Activated CD8-positive, alpha-beta T cell treated with anti-CD3 and anti-CD28 coated beads for 36 hours (primary cell): ENCODE measurements at regions of chr1 and their contacts with region 1.

Region 1: DNA sequence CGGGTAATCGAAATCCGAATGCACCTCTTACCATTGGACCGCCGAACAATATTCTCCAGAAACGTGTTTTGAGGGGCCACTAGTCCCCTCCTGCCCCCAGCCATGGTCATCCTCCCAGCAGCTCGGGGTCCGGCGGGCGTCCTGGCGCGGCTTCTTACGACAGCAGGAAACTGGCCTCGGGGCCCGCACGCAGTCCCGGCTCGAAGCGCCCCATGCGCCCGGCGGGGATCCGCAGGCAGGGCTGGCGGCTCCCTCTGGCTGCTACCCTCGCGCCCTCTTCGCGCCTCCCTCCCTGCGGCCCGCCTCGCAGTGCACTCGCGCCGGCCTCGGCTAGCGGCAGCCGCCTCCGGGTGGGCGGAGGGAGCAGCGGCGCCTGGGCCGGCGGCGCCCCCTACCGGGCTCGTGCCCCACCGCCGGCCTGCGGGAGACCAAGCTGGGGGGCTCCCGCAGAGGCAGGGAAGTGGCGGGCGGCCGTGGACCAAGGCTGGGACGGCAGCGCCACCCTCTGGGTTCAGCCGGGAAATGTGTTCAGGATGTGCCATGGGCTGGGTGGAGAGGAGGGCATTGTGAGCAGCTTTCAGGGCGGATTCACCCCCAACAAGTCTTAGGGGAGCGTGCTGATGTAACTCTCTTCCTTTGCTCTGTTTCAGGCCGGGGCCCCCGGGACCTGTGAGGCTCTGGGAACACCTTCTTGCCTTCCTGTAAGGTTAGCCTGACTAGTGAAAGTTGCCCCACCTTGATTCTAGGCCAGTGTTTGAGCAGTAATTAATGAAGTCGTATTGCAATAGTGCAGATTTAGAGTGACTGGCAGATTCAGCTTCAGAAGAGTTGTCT is at the start of gene KCNH1:
- DNase-seq: peak; percentile 92
- ATAC-seq: peak; percentile 93
- H3K4me3 Mint-ChIP-seq: peak within 1 kb of the TSS; percentile 59
- H3K27ac Mint-ChIP-seq: no peak within 1 kb of the TSS
- H3K4me1 Mint-ChIP-seq: peaks cover 7% of the 10 kb centered on the region
- H3K27me3 Mint-ChIP-seq: peaks cover 35% of the 10 kb centered on the region
- CTCF ChIP-seq: peak; percentile 97
- total RNA-seq, gene KCNH1: not detected

Region 2: DNA sequence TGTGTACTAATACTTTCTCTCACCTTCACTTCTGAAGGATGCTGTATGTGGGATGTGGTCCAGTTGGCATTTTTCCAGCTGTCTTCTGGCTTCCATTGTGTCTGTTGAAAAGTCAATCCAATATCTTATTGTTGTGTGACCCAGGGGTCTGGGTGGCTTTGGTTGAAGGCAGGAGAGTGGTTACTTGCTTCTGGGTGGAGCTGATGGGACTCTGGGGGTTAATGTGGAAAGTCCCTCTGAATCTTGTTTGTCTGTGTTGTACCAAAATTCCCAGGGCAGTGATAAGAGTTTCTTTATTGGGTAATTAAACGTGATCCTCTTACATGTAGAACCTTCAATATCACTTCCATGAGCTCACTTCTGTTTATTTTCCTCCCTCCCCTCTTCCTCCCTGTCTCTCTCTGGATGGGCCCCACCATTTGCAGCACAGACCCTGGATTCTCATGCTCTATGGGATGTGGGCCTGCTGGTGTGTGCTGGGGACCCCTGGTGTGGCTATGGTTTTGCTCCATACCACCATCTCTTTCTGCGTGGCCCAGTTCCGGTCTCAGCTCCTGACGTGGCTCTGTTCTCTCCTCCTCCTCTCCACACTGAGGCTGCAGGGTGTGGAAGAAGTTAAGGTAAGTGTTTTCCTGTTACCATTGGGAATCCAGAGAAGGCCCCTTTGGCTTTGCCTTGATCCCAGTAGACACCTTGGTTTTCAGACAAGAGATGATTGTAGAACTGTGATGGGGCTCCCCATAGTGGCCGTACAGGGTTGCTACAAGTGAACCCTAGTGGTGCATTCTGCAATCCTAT is 733.8 kb before region 1 on chr1:
- CTCF ChIA-PET with region 1: interaction called, 113 read pairs
- POLR2A ChIA-PET with region 1: no interaction called
- intact Hi-C with region 1: loop called (anchors 10 kb)
- DNase-seq: peak; percentile 85
- ATAC-seq: peak; percentile 77
- H3K4me3 Mint-ChIP-seq: peak overlapping the region; percentile 38
- H3K27ac Mint-ChIP-seq: peak overlapping the region; percentile 91
- H3K4me1 Mint-ChIP-seq: peaks cover 42% of the 10 kb centered on the region
- H3K27me3 Mint-ChIP-seq: peaks cover 2% of the 10 kb centered on the region
- CTCF ChIP-seq: peak; percentile 78

Region 3: GRCh38 chr1:210413951-210414350 is 720.1 kb before region 1 on chr1:
- CTCF ChIA-PET with region 1: interaction called, 113 read pairs
- POLR2A ChIA-PET with region 1: no interaction called
- intact Hi-C with region 1: loop called (anchors 10 kb)
- DNase-seq: no peak
- ATAC-seq: no peak
- H3K4me3 Mint-ChIP-seq: no peak overlapping the region
- H3K27ac Mint-ChIP-seq: no peak overlapping the region
- H3K4me1 Mint-ChIP-seq: peaks cover 2% of the 10 kb centered on the region
- H3K27me3 Mint-ChIP-seq: no peaks in the 10 kb centered on the region
- CTCF ChIP-seq: no peak

Region 4: DNA sequence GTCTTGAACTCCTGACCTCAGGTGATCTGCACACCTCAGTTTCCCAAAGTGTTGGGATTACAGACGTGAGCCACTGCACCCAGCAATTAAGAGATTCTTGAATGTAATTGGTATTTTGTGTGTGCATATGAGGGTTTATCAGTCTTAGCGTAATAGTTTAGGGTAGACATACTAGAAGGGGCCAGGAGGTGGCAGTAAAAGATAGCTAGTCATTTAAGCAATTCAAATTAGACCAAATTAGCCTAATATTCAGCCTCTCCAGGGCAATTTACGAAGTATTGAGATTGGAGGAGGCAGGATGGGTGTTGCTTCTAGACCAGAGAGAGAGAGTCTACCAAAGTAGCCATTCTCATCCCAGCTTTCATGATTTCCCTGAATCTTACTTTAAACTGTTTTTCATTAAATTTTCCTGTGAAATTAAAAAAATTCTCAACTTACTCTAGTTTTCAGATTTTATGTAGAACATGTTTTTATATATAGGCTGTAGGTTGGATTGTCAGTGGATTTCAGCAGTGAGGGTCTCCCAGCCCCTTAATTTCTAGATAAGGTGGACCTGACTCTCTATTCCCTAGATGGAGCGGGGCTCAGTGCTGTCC is 685.7 kb before region 1 on chr1:
- CTCF ChIA-PET with region 1: interaction called, 72 read pairs
- POLR2A ChIA-PET with region 1: interaction called, 6 read pairs
- intact Hi-C with region 1: loop called (anchors 2 kb)
- DNase-seq: peak; percentile 49
- ATAC-seq: no peak
- H3K4me3 Mint-ChIP-seq: no peak overlapping the region
- H3K27ac Mint-ChIP-seq: no peak overlapping the region
- H3K4me1 Mint-ChIP-seq: peaks cover 22% of the 10 kb centered on the region
- H3K27me3 Mint-ChIP-seq: no peaks in the 10 kb centered on the region
- CTCF ChIP-seq: peak; percentile 73

Region 5: DNA sequence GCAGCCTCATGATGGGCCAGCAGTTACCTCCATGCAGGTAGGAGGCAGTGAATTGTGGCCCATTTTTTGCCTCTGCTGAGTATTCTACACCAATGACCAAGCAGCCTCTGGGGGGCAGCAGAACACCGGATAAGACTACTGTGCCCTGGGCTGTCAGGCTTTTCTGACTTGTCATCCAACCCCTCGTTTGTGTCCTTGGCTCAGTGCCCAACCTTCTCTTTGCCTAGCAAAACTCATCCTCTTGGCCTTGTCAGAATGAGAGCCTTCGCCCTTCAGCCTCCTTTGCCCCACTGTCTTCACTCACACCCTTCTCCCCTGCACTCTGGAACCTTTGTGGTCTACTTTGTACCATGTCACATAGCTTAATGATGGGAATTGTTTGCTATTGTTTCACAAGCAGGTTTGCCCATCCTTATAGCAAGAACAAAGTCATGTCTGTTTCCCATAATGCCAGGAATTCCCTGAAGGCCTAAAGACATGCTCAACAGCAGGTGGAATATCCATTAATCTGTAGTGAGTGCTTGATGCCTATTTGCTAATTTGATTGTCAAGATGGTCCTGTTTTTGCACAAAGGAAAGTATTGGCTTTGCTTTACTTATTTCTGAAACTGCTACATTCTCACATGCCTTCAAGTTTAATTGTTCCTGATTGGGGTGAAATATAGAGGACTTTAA is 549.5 kb before region 1 on chr1:
- CTCF ChIA-PET with region 1: interaction called, 49 read pairs
- POLR2A ChIA-PET with region 1: interaction called, 3 read pairs
- intact Hi-C with region 1: loop called (anchors 2 kb)
- DNase-seq: peak; percentile 91
- ATAC-seq: peak; percentile 88
- H3K4me3 Mint-ChIP-seq: no peak overlapping the region
- H3K27ac Mint-ChIP-seq: no peak overlapping the region
- H3K4me1 Mint-ChIP-seq: peaks cover 11% of the 10 kb centered on the region
- H3K27me3 Mint-ChIP-seq: no peaks in the 10 kb centered on the region
- CTCF ChIP-seq: peak; percentile 67

Region 6: GRCh38 chr1:211118407-211119102 is 15.5 kb before region 1 on chr1:
- CTCF ChIA-PET with region 1: interaction called, 11 read pairs
- POLR2A ChIA-PET with region 1: no interaction called
- intact Hi-C with region 1: no loop called
- DNase-seq: no peak
- ATAC-seq: no peak
- H3K4me3 Mint-ChIP-seq: no peak overlapping the region
- H3K27ac Mint-ChIP-seq: no peak overlapping the region
- H3K4me1 Mint-ChIP-seq: no peaks in the 10 kb centered on the region
- H3K27me3 Mint-ChIP-seq: peaks cover 33% of the 10 kb centered on the region
- CTCF ChIP-seq: no peak

Region 7: DNA sequence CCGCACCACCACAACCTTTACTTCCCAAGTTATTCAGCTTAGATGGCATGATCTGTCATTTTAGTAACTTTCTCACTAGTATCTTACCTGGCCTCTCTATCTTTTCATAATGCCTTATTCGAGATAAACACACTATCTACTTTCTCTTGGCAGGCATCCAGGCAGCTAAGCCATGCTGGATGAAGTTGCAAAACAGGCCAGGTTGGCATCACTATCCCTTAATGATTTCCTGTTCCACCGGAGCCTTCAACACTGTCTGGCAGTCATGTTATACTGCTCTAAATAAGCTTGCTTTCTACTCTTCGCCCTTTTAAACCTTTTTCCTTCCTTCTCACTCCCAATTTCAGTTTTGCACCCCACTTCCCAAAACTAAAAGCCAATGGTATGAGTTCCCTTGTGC is 11.9 kb after region 1 on chr1:
- CTCF ChIA-PET with region 1: interaction called, 21 read pairs
- POLR2A ChIA-PET with region 1: no interaction called
- intact Hi-C with region 1: no loop called
- DNase-seq: no peak
- ATAC-seq: no peak
- H3K4me3 Mint-ChIP-seq: no peak overlapping the region
- H3K27ac Mint-ChIP-seq: no peak overlapping the region
- H3K4me1 Mint-ChIP-seq: no peaks in the 10 kb centered on the region
- H3K27me3 Mint-ChIP-seq: peaks cover 25% of the 10 kb centered on the region
- CTCF ChIP-seq: no peak